ENCODE measurements at regions of chr19 and their contacts with region 1.

Region 1: DNA sequence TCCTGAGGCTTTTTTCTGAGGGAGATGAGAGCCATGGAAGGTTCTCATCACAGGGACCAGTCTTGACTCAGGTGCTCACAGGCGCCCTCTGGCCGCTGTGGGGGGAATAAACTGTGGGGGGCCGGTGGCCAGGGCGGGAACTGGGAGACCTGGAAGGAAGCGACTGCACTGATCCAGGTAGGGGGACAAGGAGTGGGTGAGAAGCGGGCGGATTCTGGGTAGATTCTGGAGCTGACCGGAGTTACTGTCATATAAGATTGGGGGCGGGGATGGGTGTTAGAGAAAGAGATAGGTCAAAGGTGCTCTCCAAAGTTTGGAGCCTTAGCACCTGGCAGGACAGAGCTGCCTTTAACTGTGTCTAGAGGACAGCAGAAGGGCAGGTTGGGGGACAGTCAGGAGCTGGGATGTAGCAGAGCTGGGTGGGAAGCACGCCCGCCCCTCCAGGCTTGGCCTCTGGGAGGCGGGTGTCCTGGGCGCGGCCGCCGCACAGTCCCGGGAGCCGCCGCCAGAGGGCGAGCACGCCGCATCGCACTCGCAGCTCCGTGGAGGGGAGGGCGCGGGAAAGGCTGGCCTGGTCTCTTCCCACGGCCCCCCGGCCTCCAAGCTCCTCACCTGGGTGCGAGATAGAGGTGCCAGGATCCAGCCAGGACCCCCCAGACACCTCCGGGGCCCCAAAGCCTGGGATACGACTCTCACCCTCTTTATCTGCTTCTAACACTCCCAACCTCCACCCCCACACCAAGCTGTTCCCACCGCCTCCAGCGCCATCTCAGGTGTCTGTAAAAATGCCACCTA is 4.2 kb upstream of the DAND5 start:
- DNase-seq: peak; percentile 87
- H3K4me3 Mint-ChIP-seq: peak overlapping the region; percentile 90
- H3K27ac Mint-ChIP-seq: peak overlapping the region; percentile 89
- H3K4me1 Mint-ChIP-seq: peaks cover 10% of the 10 kb centered on the region
- H3K27me3 Mint-ChIP-seq: peaks cover 28% of the 10 kb centered on the region

Region 2: DNA sequence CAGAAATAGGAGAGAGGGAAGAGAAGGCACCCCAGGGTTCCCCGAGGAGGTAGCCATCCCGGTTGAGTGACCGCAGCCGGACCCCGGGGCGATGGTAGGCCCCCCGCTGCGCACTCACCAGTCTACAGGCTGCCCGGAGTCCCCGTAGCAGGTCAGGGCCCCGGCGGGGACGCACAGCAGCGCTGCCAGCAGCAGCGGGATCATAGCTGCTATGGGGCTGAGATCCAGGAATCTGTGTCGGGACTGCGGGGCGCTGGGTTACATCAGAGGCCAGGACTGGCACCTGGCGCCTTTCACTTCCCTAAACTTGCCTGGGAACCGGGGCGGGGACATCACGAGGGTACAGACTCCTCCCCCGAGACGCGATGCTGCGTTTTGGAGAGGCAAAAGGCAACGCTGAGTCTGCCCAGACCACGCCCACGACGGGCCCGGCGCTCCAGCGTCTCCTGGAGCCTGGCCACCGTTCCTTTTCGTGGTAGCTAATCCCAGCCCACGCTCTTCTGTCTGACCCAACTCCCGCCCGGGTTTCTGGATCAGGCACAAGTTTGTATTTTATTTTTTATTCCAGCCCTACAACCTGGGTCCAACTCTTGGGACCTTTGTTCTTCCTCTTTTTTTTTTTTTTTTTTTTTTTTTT is 83.9 kb before region 1 on chr19 and contains the start of gene DNASE2:
- CTCF ChIA-PET with region 1: interaction called, 87 read pairs
- DNase-seq: peak; percentile 97
- H3K4me3 Mint-ChIP-seq: peak within 1 kb of the TSS; percentile 90
- H3K27ac Mint-ChIP-seq: peak within 1 kb of the TSS; percentile 90
- H3K4me1 Mint-ChIP-seq: peaks cover 42% of the 10 kb centered on the region
- H3K27me3 Mint-ChIP-seq: peaks cover 9% of the 10 kb centered on the region

Region 3: GRCh38 chr19:13033819-13034611 is 68.8 kb after region 1 on chr19:
- CTCF ChIA-PET with region 1: interaction called, 17 read pairs
- DNase-seq: peak; percentile 63
- H3K4me3 Mint-ChIP-seq: no peak overlapping the region
- H3K27ac Mint-ChIP-seq: no peak overlapping the region
- H3K4me1 Mint-ChIP-seq: no peaks in the 10 kb centered on the region
- H3K27me3 Mint-ChIP-seq: peaks cover 13% of the 10 kb centered on the region

Region 4: DNA sequence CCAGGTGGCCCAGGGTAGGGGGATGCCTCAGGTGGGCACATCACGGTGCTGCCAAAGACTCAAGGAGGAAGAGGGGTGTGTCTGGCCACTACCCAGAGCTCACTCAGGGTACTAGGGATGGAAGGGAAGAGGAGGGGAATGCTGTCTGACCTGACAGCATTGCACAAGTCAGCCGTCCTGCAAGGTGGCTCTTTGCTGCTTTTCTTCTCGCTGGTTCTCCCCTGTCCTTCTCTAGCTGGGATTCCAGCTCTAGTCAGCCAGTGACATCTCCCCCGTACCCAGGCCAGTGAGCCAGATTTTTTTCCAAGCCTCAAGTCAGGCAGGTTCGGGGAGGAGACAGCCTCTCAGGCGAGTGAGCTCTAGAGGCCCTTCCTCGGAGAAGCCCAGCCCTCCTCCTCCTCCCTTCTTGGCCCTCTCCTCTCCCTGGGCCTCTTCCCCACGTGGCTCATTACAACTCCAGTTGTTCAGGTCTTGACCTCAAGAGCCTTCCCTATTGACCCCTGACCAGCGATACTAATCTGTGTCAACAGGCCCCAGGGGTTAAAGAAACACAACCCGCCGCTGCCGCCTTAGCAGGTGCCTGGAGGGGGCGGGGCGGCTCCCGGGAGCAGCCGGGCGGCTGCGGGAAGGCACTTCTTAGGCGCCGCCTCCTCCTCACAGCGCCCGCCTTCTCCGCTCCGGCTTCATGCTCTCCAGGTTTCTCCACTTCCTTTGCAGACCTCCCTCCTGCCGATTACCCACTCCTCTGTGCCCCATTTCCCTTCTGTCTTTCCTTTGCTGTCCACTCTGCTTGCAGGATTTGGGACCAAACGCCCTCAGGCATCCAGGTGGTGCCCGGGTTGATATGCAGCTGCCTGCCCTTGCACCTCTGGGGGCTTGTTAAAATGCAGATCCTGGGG is 86.3 kb after region 1 on chr19:
- CTCF ChIA-PET with region 1: interaction called, 13 read pairs
- DNase-seq: peak; percentile 48
- H3K4me3 Mint-ChIP-seq: no peak overlapping the region
- H3K27ac Mint-ChIP-seq: no peak overlapping the region
- H3K4me1 Mint-ChIP-seq: peaks cover 7% of the 10 kb centered on the region
- H3K27me3 Mint-ChIP-seq: peaks cover 67% of the 10 kb centered on the region

Region 5: GRCh38 chr19:13104360-13104847 is 139.2 kb after region 1 on chr19:
- CTCF ChIA-PET with region 1: interaction called, 19 read pairs
- DNase-seq: peak; percentile 79
- H3K4me3 Mint-ChIP-seq: peak overlapping the region; percentile 82
- H3K27ac Mint-ChIP-seq: peak overlapping the region; percentile 88
- H3K4me1 Mint-ChIP-seq: peaks cover 48% of the 10 kb centered on the region
- H3K27me3 Mint-ChIP-seq: peaks cover 17% of the 10 kb centered on the region